Calu3 (cell line): ENCODE measurements at regions of chr2 and their contacts with region 1.

Region 1: GRCh38 chr2:161825429-161825828 is 201.2 kb downstream of the SLC4A10 start:
- DNase-seq: no peak
- H3K4me3 Mint-ChIP-seq: no peak overlapping the region
- H3K27ac Mint-ChIP-seq: no peak overlapping the region
- H3K4me1 Mint-ChIP-seq: no peaks in the 10 kb centered on the region
- H3K27me3 Mint-ChIP-seq: no peaks in the 10 kb centered on the region
- CTCF ChIP-seq: no peak

Region 2: DNA sequence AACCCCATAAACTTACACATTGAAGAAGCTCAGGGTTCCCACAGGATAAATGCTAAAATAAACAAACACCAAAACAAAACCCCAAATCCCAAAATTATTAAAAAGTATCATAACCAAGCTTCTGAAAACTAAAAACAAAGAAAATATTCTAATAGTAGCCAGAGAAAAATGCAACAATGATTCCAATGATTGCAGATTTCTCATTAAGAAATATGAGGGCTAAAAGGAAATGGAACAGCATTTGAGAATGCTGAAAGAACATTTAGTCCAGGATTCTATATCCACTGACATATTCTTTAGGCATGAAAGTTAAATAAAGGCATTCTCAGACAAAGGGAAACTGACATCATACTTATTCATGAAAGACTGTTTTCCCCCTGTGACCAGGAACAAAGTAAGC is 11.2 kb after region 1 on chr2:
- CTCF ChIA-PET with region 1: interaction called, 13 read pairs
- intact Hi-C with region 1: no loop called
- DNase-seq: no peak
- H3K4me3 Mint-ChIP-seq: no peak overlapping the region
- H3K27ac Mint-ChIP-seq: no peak overlapping the region
- H3K4me1 Mint-ChIP-seq: no peaks in the 10 kb centered on the region
- H3K27me3 Mint-ChIP-seq: no peaks in the 10 kb centered on the region
- CTCF ChIP-seq: no peak

Region 3: GRCh38 chr2:162297925-162298552 is 472.6 kb after region 1 on chr2:
- CTCF ChIA-PET with region 1: no interaction called
- intact Hi-C with region 1: no loop called
- DNase-seq: peak; percentile 65
- H3K4me3 Mint-ChIP-seq: no peak overlapping the region
- H3K27ac Mint-ChIP-seq: no peak overlapping the region
- H3K4me1 Mint-ChIP-seq: peaks cover under 1% of the 10 kb centered on the region
- H3K27me3 Mint-ChIP-seq: no peaks in the 10 kb centered on the region
- CTCF ChIP-seq: peak; percentile 72

Region 4: GRCh38 chr2:162370931-162371330 is 545.5 kb after region 1 on chr2:
- CTCF ChIA-PET with region 1: no interaction called
- intact Hi-C with region 1: no loop called
- DNase-seq: no peak
- H3K4me3 Mint-ChIP-seq: no peak overlapping the region
- H3K27ac Mint-ChIP-seq: no peak overlapping the region
- H3K4me1 Mint-ChIP-seq: no peaks in the 10 kb centered on the region
- H3K27me3 Mint-ChIP-seq: no peaks in the 10 kb centered on the region
- CTCF ChIP-seq: no peak